ENCODE measurements at regions of chr15 and their contacts with region 1.

Region 1: DNA sequence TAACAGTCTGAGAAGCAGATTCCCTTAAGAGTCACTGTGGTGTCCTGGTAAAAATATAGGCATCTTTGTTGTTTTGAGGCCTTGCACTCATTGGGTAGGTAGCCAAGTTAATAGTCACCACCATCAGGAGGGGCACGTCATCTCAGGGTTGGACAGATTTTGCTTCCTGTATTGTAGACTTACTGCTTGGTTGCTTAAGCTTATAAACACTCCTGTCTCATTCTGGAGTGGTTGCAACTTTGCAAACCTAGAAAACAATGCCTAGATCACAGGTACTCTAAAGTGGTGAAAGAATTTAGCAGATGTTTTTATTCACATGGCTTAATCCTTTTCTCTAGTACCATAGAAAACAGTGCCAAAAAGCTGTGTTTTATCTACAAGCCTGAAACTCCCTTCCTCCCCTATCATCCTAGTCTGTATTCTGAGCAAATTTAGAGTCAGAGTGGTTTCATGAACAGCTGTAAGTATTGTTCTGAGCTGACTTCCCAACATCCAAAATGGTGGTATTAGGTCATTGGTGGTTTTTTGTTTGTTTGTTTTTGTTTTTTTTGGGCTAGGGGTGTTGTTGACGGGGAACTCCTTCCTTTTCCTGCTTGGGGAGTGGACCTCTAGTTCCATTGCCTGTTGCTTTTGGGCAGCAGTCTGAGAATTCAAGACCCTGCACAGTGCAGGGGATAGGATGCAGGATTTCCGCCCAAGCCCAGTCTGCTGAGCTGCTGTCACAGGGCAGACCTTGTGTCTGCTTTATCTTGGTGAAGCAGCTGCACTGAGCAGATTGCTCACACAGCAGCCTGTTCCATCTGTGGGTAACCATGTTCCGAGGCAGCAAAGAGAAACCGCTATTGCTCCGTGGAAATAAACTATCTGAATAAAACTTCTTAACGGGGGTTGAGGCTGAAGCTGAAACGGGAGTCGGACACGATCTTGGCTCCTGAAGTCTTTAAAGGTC is 202.0 kb downstream of the AKAP13 start:
- DNase-seq: peak; percentile 76
- H3K4me3 Mint-ChIP-seq: peak overlapping the region; percentile 75
- H3K27ac Mint-ChIP-seq: peak overlapping the region; percentile 98
- H3K4me1 Mint-ChIP-seq: peaks cover 79% of the 10 kb centered on the region
- H3K27me3 Mint-ChIP-seq: no peaks in the 10 kb centered on the region

Region 2: DNA sequence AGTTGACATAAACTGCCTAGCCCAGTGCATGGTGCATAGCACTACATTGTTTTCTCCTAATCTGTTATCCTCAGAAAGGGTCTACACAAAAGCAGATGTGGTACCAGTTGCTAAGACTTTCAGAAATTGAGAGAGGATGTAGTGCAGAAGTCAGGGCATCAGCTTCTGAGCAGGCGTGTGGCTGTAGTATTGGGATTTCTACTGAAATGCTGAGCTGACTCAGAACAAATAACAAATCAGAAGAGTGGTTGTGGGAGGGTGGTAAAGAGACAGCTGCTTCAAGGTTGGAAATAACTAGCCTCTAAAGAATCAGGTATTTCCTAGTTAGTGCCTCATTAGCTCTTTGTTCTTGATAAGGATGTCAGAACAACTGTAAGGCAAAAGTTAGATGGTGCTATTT is 40.7 kb before region 1 on chr15:
- CTCF ChIA-PET with region 1: interaction called, 5 read pairs
- POLR2A ChIA-PET with region 1: interaction called, 11 read pairs
- DNase-seq: peak; percentile 19
- H3K4me3 Mint-ChIP-seq: no peak overlapping the region
- H3K27ac Mint-ChIP-seq: no peak overlapping the region
- H3K4me1 Mint-ChIP-seq: peaks cover 67% of the 10 kb centered on the region
- H3K27me3 Mint-ChIP-seq: no peaks in the 10 kb centered on the region

Region 3: DNA sequence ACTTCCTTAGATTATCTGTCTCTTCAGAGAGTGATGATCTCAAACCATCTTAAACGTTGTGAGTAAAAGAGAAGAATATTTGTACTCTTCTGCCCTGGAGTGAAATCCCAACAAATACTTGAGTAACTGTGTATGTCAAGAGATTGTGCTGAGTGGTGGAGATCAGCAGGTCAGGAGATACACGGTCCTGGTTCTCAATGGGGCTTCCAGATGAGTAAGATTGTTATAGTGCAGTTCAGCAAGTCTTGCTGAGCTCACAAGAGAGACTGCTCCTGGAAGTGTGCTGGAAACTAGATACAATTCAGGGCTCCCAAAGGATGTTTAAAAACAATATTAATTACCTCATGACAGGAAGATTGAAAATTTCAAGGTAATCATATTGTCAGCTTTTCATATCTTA is 17.7 kb before region 1 on chr15:
- CTCF ChIA-PET with region 1: no interaction called
- POLR2A ChIA-PET with region 1: no interaction called
- DNase-seq: no peak
- H3K4me3 Mint-ChIP-seq: no peak overlapping the region
- H3K27ac Mint-ChIP-seq: no peak overlapping the region
- H3K4me1 Mint-ChIP-seq: peaks cover 3% of the 10 kb centered on the region
- H3K27me3 Mint-ChIP-seq: no peaks in the 10 kb centered on the region

Region 4: GRCh38 chr15:85625856-85626255 is 43.5 kb after region 1 on chr15:
- CTCF ChIA-PET with region 1: interaction called, 7 read pairs
- POLR2A ChIA-PET with region 1: interaction called, 35 read pairs
- DNase-seq: peak; percentile 51
- H3K4me3 Mint-ChIP-seq: peak overlapping the region; percentile 51
- H3K27ac Mint-ChIP-seq: peak overlapping the region; percentile 90
- H3K4me1 Mint-ChIP-seq: peaks cover 74% of the 10 kb centered on the region
- H3K27me3 Mint-ChIP-seq: no peaks in the 10 kb centered on the region

Region 5: GRCh38 chr15:85689729-85690128 is 107.3 kb after region 1 on chr15:
- CTCF ChIA-PET with region 1: interaction called, 3 read pairs
- POLR2A ChIA-PET with region 1: interaction called, 46 read pairs
- DNase-seq: peak; percentile 69
- H3K4me3 Mint-ChIP-seq: peak overlapping the region; percentile 96
- H3K27ac Mint-ChIP-seq: peak overlapping the region; percentile 99
- H3K4me1 Mint-ChIP-seq: peaks cover 74% of the 10 kb centered on the region
- H3K27me3 Mint-ChIP-seq: no peaks in the 10 kb centered on the region

Region 6: DNA sequence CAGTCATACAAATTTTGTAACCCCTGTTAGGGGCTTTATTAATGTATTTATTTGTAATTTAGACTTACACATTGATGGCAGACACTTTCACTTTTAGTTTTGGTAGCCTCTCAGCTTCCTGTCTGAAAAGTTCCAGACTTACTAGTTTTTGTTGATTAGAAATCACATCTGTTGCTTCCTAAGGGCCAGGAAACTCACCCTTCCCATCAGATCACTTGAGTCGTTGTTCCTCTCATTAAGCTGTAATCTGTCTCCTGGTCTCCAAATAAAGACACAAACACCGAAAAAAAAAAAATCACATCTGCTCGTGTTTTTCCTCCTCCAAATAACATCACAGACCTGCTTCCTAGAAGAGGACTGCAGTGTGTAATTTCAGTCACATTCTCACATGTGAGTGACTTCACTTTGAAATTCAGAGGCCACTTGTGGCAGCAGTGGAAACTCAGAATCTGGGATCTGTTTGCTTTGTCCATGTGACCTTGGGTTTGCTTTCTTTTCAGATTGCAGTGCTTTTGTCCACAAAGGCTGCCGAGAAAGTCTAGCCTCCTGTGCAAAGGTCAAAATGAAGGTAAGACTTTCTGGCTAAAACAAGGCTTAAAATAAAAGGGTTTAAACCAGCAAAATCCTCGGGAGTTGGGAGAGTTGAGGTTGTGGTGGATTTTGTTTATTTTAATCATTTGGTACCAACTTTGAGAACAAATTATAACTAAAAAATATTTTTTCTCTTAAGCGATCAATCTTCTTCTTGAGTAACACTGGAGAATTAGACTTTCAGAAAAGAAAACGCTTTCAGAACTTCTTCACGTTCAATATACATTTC is 125.3 kb after region 1 on chr15:
- CTCF ChIA-PET with region 1: interaction called, 5 read pairs
- POLR2A ChIA-PET with region 1: interaction called, 19 read pairs
- DNase-seq: no peak
- H3K4me3 Mint-ChIP-seq: peak overlapping the region; percentile 62
- H3K27ac Mint-ChIP-seq: peak overlapping the region; percentile 94
- H3K4me1 Mint-ChIP-seq: peaks cover 73% of the 10 kb centered on the region
- H3K27me3 Mint-ChIP-seq: no peaks in the 10 kb centered on the region